SK-N-SH (cell line): ENCODE measurements at regions of chr7 and their contacts with region 1.

Region 1: DNA sequence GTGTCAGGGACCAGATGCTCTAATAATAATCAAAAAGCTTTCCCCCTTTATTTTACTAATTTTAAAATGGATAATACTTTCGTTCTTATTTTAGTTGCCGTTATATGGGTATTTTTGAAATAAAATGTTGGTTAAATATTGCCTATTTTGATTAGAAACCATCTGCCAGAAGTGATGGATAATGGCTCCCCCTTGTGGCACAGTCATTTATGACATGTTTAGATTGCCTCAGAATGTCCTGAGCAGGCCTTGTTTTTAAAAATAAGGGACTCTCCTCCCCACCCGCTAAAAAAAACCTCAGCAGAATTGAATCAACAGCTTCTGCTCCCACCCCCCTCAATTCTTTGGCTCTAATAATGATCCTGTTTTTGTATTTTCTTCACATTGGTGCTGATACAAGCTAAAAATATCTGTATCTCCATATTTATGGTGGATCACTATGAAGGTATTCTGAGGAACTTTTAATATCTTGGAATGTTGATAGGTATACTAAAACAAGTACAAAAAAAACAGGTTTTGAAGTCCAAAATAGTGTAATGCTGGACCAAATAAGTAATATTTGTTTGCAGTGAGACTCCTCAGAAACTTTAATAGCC is 38.8 kb downstream of the TMEM60 start:
- DNase-seq: peak; percentile 51
- H3K4me3 ChIP-seq: no peak overlapping the region
- H3K27ac ChIP-seq: peak overlapping the region in 1 of 2 experiments; percentile 1; a peak in 1 of 4 replicates
- H3K4me1 ChIP-seq: peaks cover 0 to 4% of the 10 kb centered on the region in 2 experiments; a peak in 1 of 4 replicates
- H3K27me3 ChIP-seq: no peaks in the 10 kb centered on the region
- CTCF ChIP-seq: peak; percentile 98
- EP300 ChIP-seq: no peak
- RAD21 ChIP-seq: peak; percentile 98

Region 2: DNA sequence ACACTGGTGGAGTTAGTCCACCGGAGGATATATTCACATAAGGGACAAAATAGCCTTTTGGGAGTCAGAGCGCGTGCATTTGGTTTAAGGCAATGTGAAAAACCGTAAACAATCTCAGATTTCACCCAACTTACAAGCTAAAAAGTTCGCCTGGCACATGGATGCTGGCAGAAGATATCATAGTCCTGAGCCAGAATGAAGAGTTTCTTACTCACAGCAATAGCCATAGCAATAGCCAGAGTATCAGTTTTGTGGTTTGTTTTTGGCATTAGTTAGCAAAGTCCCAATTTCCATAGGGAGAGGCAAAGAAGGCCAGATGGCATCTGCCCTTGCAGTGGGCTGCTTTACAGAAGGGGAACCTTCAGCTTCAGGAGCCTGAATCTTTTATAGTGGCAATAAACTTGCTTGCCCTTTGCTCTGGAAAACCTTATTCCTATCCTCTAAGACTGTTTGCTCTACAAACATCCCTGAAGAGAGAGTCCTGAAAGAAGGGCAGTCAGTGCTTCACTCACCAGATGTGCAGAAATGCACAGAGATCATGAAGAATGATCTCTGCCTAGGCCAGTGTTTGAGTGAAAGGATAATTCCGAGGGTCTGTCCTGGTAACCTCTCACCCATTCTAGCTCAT is 91.8 kb before region 1 on chr7:
- CTCF ChIA-PET with region 1: interaction called, 25 read pairs
- POLR2A ChIA-PET with region 1: no interaction called
- DNase-seq: no peak
- H3K4me3 ChIP-seq: no peak overlapping the region
- H3K27ac ChIP-seq: no peak overlapping the region
- H3K4me1 ChIP-seq: no peaks in the 10 kb centered on the region
- H3K27me3 ChIP-seq: no peaks in the 10 kb centered on the region
- CTCF ChIP-seq: no peak
- EP300 ChIP-seq: no peak
- RAD21 ChIP-seq: no peak

Region 3: GRCh38 chr7:77690289-77690688 is 69.1 kb before region 1 on chr7:
- CTCF ChIA-PET with region 1: interaction called, 14 read pairs
- POLR2A ChIA-PET with region 1: no interaction called
- DNase-seq: no peak
- H3K4me3 ChIP-seq: no peak overlapping the region
- H3K27ac ChIP-seq: no peak overlapping the region
- H3K4me1 ChIP-seq: peaks cover 0 to 10% of the 10 kb centered on the region in 2 experiments; a peak in 1 of 4 replicates
- H3K27me3 ChIP-seq: no peaks in the 10 kb centered on the region
- CTCF ChIP-seq: no peak
- EP300 ChIP-seq: no peak
- RAD21 ChIP-seq: no peak

Region 4: DNA sequence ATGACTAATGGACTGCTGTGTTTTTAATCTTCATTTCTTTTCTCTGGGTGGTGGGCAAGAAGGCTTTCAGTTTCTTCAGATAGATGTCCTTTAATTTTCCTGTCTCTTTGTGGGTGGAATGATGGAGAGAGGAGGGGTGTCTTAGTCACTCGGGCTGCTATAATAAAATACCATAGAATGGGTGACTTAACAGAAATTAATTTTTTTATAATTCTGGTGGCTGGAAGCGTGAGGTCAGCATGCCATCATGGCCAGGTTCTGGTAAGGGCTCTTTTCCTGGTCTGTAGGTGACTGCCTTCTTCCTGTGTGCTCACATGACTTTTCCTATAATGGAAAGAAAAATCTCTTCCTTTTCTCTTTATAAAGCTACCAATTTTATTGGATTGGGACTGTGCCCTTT is 56.9 kb before region 1 on chr7:
- CTCF ChIA-PET with region 1: interaction called, 21 read pairs
- POLR2A ChIA-PET with region 1: no interaction called
- DNase-seq: no peak
- H3K4me3 ChIP-seq: no peak overlapping the region
- H3K27ac ChIP-seq: peak overlapping the region in 1 of 2 experiments; percentile 43; a peak in 2 of 4 replicates
- H3K4me1 ChIP-seq: peaks cover 3 to 10% of the 10 kb centered on the region in 2 experiments; a peak in 2 of 4 replicates
- H3K27me3 ChIP-seq: no peaks in the 10 kb centered on the region
- CTCF ChIP-seq: no peak
- EP300 ChIP-seq: no peak
- RAD21 ChIP-seq: no peak

Region 5: GRCh38 chr7:77740257-77740656 is 19.1 kb before region 1 on chr7:
- CTCF ChIA-PET with region 1: interaction called, 14 read pairs
- POLR2A ChIA-PET with region 1: no interaction called
- DNase-seq: no peak
- H3K4me3 ChIP-seq: no peak overlapping the region
- H3K27ac ChIP-seq: no peak overlapping the region
- H3K4me1 ChIP-seq: peaks cover 0 to 14% of the 10 kb centered on the region in 2 experiments; a peak in 2 of 4 replicates
- H3K27me3 ChIP-seq: no peaks in the 10 kb centered on the region
- CTCF ChIP-seq: no peak
- EP300 ChIP-seq: no peak
- RAD21 ChIP-seq: no peak

Region 6: GRCh38 chr7:77771901-77772300 is 12.5 kb after region 1 on chr7:
- CTCF ChIA-PET with region 1: interaction called, 14 read pairs
- POLR2A ChIA-PET with region 1: no interaction called
- DNase-seq: no peak
- H3K4me3 ChIP-seq: no peak overlapping the region
- H3K27ac ChIP-seq: no peak overlapping the region
- H3K4me1 ChIP-seq: no peaks in the 10 kb centered on the region
- H3K27me3 ChIP-seq: no peaks in the 10 kb centered on the region
- CTCF ChIP-seq: no peak
- EP300 ChIP-seq: no peak
- RAD21 ChIP-seq: no peak

Region 7: GRCh38 chr7:77808517-77808916 is 49.1 kb after region 1 on chr7:
- CTCF ChIA-PET with region 1: no interaction called
- POLR2A ChIA-PET with region 1: no interaction called
- DNase-seq: no peak
- H3K4me3 ChIP-seq: no peak overlapping the region
- H3K27ac ChIP-seq: no peak overlapping the region
- H3K4me1 ChIP-seq: peaks cover 4 to 14% of the 10 kb centered on the region in 2 experiments; a peak in 2 of 4 replicates
- H3K27me3 ChIP-seq: no peaks in the 10 kb centered on the region
- CTCF ChIP-seq: no peak
- EP300 ChIP-seq: no peak
- RAD21 ChIP-seq: no peak

Region 8: GRCh38 chr7:78073609-78074382 is 314.4 kb after region 1 on chr7:
- CTCF ChIA-PET with region 1: no interaction called
- POLR2A ChIA-PET with region 1: no interaction called
- DNase-seq: no peak
- H3K4me3 ChIP-seq: no peak overlapping the region
- H3K27ac ChIP-seq: no peak overlapping the region
- H3K4me1 ChIP-seq: peaks cover 0 to 4% of the 10 kb centered on the region in 2 experiments; a peak in 1 of 4 replicates
- H3K27me3 ChIP-seq: no peaks in the 10 kb centered on the region
- CTCF ChIP-seq: no peak
- EP300 ChIP-seq: no peak
- RAD21 ChIP-seq: no peak